CD4-positive, alpha-beta memory T cell (primary cell): ENCODE measurements at regions of chr4 and their contacts with region 1.

Region 1: DNA sequence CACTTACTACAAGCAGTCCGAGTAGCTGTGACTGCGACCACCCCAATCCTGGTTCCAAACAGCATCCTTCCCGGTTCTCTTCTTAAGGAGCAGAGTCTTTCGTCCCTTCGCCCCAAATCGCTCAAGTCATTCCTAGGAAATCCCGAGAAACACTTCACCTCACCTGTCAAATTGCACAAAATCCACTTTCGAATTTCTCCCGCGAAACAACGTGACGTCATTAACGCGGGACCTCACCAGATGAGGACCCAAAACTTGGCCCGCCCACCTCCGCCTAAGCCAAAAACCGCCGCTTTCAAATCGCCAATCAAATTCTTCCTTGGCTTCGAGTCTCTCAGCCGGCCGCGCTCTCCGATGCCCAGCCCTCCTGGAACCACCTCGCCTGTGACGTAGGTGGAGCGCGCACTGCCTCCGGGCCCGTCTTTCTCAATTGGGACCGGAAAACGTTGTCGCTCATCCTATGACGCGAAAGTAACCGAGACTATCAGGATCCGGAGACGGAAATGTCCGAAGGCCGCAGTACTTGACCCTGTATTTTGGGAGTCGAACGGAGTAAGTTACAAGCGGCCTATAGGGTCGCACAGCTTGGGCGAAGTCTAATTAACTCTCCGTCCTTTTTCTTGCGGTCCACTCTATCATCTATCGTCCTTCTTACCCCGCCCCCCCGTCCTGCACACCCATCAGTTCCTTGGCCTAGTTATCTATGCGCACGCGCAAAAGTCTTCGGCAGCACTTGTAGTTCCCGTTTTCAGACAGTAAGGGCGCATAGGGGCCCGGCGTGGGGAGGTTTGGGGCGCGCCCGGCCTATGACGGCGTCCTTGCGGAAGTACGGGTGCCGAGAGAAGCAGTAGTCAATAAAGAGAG is at the starts of genes LARP7 and ZGRF1:
- DNase-seq: peak; percentile 99
- H3K4me3 ChIP-seq: peak within 1 kb of the TSS; percentile 71 to 96
- H3K4me3 Mint-ChIP-seq: peak within 1 kb of the TSS in 3 of 8 donors; percentile 2 to 39 (median 27)
- H3K27ac ChIP-seq: peak within 1 kb of the TSS; percentile 93
- H3K27ac Mint-ChIP-seq: peak within 1 kb of the TSS in 1 of 7 donors; percentile 53
- H3K4me1 ChIP-seq: peaks cover 23% of the 10 kb centered on the region
- H3K4me1 Mint-ChIP-seq: peaks cover 13 to 25% (median 22%) of the 10 kb centered on the region in 4 donors
- H3K27me3 ChIP-seq: no peaks in the 10 kb centered on the region
- H3K27me3 Mint-ChIP-seq: no peaks in the 10 kb centered on the region
- total RNA-seq, gene LARP7: 44.1 to 47.9 TPM
- total RNA-seq, gene ZGRF1: 6.2 to 7.6 TPM

Region 2: DNA sequence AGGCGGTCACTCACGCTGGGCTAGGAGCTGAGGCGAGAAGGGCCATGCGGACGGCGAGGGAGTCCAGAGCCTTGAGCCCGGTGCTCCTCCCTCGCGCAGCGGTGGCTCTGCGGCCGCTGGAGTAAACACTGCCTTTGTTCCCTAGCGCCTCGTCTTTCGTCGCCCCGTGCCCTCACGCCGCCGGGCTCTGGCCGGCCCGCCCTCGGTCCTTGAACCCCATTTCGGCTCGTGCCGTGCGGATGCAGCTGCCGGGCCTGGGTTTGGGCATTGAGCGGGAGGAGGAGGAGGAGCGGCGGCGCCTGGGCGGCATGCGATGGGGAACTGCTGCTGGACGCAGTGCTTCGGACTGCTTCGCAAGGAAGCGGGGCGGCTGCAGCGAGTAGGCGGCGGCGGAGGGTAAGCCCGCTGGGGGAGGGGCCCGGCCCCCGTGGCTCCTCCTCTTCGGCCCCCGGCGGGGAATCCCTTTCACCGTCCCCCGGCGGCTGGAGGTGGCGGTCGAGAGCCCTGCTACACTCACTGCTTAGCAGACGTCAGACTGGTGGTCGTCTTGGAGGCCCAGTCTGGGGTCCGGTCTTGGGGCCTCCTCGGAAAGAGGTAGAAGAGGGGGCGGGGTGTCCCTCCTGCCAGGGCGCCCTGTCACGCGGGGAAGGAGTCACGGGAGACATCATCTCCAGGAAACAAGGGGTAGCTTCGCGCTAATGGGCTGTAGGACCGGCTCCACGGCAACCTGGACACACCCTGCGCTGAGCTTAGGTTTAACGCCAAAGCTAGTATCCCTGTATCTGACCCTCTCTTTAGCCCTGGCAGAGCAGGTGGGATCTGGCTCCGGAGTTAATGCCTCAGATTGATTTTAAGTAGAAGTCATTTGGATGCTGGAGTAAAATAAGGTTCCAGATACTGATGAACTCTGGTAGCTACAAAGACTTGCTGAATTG is 404.9 kb before region 1 on chr4 and contains the start of gene AP1AR:
- CTCF ChIA-PET with region 1: no interaction called
- POLR2A ChIA-PET with region 1: no interaction called
- intact Hi-C with region 1: loop called (anchors 1 kb)
- DNase-seq: peak; percentile 77 to 86 (median 79)
- H3K4me3 ChIP-seq: peak within 1 kb of the TSS; percentile 84 to 90
- H3K4me3 Mint-ChIP-seq: peak within 1 kb of the TSS; percentile 93 to 99 (median 96)
- H3K27ac ChIP-seq: peak within 1 kb of the TSS; percentile 92
- H3K27ac Mint-ChIP-seq: peak within 1 kb of the TSS; percentile 98 to 100 (median 100)
- H3K4me1 ChIP-seq: peaks cover 40% of the 10 kb centered on the region
- H3K4me1 Mint-ChIP-seq: peaks cover 18 to 45% (median 26%) of the 10 kb centered on the region in 4 donors
- H3K27me3 ChIP-seq: no peaks in the 10 kb centered on the region
- H3K27me3 Mint-ChIP-seq: no peaks in the 10 kb centered on the region
- total RNA-seq, gene AP1AR: 20.3 to 22.8 TPM

Region 3: GRCh38 chr4:112523764-112524505 is 113.0 kb before region 1 on chr4:
- CTCF ChIA-PET with region 1: no interaction called
- POLR2A ChIA-PET with region 1: no interaction called
- intact Hi-C with region 1: loop called (anchors 1 kb)
- DNase-seq: peak; percentile 66 to 74 (median 67)
- H3K4me3 ChIP-seq: peak overlapping the region; percentile 20 to 46
- H3K4me3 Mint-ChIP-seq: peak overlapping the region; percentile 81 to 94 (median 86)
- H3K27ac ChIP-seq: no peak overlapping the region
- H3K27ac Mint-ChIP-seq: peak overlapping the region in 1 of 7 donors; percentile 65
- H3K4me1 ChIP-seq: peaks cover 24% of the 10 kb centered on the region
- H3K4me1 Mint-ChIP-seq: peaks cover 9 to 51% (median 19%) of the 10 kb centered on the region in 4 donors
- H3K27me3 ChIP-seq: peaks cover 45% of the 10 kb centered on the region
- H3K27me3 Mint-ChIP-seq: peaks cover 44 to 46% of the 10 kb centered on the region in 2 donors

Region 4: DNA sequence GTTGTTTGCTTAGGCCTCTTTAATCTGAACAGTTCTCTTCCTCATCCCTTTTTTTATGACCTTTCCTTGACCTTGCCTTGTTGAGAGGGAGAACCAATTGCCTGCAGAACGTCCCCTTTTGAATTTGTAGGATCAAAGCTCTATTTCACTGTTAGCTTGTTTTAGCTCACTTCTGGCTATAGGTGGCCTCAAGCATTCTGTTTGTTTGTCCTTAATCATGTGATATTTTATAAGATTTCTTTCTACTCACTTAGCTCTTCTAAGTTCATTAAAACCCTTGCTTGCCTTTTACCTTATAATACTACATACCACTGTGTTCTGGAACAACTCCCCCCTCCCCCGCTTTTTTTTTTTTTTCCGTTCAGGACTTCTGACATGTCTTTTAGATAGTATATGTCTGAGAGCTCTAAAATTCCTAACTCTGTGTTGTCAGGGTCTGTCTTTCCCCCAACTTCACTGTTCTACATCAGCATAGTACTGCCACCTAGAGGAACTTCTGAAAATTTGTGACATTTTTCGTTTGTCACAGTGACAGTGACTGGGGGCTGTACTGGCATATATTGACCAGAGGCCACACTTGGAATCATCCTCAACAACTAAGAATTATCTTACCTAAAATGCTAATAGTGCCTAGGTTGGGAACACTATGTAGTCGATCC is 128.5 kb after region 1 on chr4:
- CTCF ChIA-PET with region 1: interaction called, 57 read pairs
- POLR2A ChIA-PET with region 1: no interaction called
- intact Hi-C with region 1: loop called (anchors 1 kb)
- DNase-seq: no peak
- H3K4me3 ChIP-seq: no peak overlapping the region
- H3K4me3 Mint-ChIP-seq: no peak overlapping the region
- H3K27ac ChIP-seq: no peak overlapping the region
- H3K27ac Mint-ChIP-seq: no peak overlapping the region
- H3K4me1 ChIP-seq: no peaks in the 10 kb centered on the region
- H3K4me1 Mint-ChIP-seq: peaks cover 0 to 2% (median under 1%) of the 10 kb centered on the region in 4 donors
- H3K27me3 ChIP-seq: no peaks in the 10 kb centered on the region
- H3K27me3 Mint-ChIP-seq: peaks cover 0 to 1% of the 10 kb centered on the region in 2 donors

Region 5: GRCh38 chr4:112951362-112952312 is 314.7 kb after region 1 on chr4:
- CTCF ChIA-PET with region 1: interaction called, 3 read pairs
- POLR2A ChIA-PET with region 1: no interaction called
- intact Hi-C with region 1: loop called (anchors 1 kb)
- DNase-seq: peak in 3 of 5 donors; percentile 3 to 10 (median 3)
- H3K4me3 ChIP-seq: no peak overlapping the region
- H3K4me3 Mint-ChIP-seq: no peak overlapping the region
- H3K27ac ChIP-seq: no peak overlapping the region
- H3K27ac Mint-ChIP-seq: no peak overlapping the region
- H3K4me1 ChIP-seq: no peaks in the 10 kb centered on the region
- H3K4me1 Mint-ChIP-seq: no peaks in the 10 kb centered on the region
- H3K27me3 ChIP-seq: no peaks in the 10 kb centered on the region
- H3K27me3 Mint-ChIP-seq: peaks cover 4 to 6% of the 10 kb centered on the region in 2 donors